Heart right ventricle (tissue), 16 donors: ENCODE measurements at regions of chr18 and their contacts with region 1.

Region 1: GRCh38 chr18:56235481-56236013 is 402.8 kb downstream of the TXNL1 start:
- DNase-seq: no peak
- ATAC-seq: no peak
- H3K4me3 ChIP-seq: no peak overlapping the region
- H3K27ac ChIP-seq: no peak overlapping the region
- H3K4me1 ChIP-seq: peaks cover 0 to 15% (median 4%) of the 10 kb centered on the region in 9 donors
- H3K27me3 ChIP-seq: no peaks in the 10 kb centered on the region
- CTCF ChIP-seq: no peak

Region 2: GRCh38 chr18:56112013-56112749 is 123.4 kb before region 1 on chr18:
- intact Hi-C with region 1: loop called in 1 of 10 experiments (anchors 10 kb)
- DNase-seq: no peak
- ATAC-seq: no peak
- H3K4me3 ChIP-seq: no peak overlapping the region
- H3K27ac ChIP-seq: peak overlapping the region in 2 of 10 donors; percentile 19 to 21
- H3K4me1 ChIP-seq: peaks cover 0 to 38% (median 12%) of the 10 kb centered on the region in 9 donors
- H3K27me3 ChIP-seq: no peaks in the 10 kb centered on the region
- CTCF ChIP-seq: no peak

Region 3: GRCh38 chr18:56188529-56189285 is 46.8 kb before region 1 on chr18:
- intact Hi-C with region 1: no loop called
- DNase-seq: no peak
- ATAC-seq: no peak
- H3K4me3 ChIP-seq: no peak overlapping the region
- H3K27ac ChIP-seq: no peak overlapping the region
- H3K4me1 ChIP-seq: no peaks in the 10 kb centered on the region
- H3K27me3 ChIP-seq: no peaks in the 10 kb centered on the region
- CTCF ChIP-seq: no peak